CD14-positive monocyte (primary cell): ENCODE measurements at regions of chr7 and their contacts with region 1.

Region 1: DNA sequence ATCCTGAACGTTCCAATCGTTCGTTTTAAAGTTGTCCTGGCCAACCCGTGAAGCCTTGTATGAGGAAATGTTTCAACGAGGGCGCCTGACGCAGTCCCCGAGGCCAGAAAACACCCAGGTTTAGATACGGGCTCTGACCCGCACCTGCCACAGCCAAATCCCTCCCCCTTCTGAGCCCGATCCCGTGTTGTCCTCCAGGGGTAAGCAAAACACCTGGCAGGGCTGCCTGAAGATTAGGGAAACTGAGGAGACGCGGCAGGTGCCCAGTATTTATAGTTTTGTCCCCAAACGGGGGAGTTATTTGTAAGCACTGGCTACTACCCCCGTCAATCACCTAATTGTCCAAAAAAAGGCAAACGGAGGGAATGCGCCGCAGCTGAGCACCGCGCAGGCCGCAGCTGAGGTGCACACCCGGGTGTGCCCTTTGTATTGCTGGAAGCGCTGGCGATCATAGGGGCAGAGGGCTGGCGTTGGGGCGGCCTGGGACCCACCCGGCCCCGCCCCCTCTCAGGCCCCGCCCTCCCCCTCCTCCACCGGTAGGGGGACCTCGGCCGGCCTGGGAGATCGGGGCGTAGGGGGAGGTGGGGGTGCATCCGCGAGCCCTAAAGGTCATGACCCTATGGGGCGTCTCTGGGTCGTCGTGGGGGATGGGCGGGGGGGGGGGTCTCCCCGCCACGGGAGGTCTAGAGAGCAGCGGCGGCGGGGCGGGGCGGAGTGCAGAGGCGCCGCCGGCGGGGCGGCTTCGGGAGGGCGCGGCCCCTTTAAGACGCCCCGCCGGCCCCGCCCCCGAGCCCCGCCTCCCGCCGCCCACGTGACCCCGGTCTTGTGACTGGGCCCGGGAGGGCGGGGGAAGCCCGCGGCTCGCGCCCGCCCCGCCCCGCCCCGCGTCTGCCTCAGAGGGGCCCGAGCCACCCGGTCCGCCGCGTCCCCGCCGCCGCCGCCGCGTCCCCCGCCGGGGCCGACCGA is at the start of gene BRI3:
- DNase-seq: peak; percentile 85 to 90 (median 89)
- H3K4me3 ChIP-seq: peak within 1 kb of the TSS; percentile 85 to 96 (median 91)
- H3K4me3 Mint-ChIP-seq: peak within 1 kb of the TSS; percentile 92 to 97
- H3K27ac ChIP-seq: peak within 1 kb of the TSS; percentile 98 to 99
- H3K27ac Mint-ChIP-seq: peak within 1 kb of the TSS; percentile 96 to 99 (median 98)
- H3K4me1 ChIP-seq: peaks cover 47 to 62% of the 10 kb centered on the region in 2 donors
- H3K4me1 Mint-ChIP-seq: peaks cover 54% of the 10 kb centered on the region
- H3K27me3 ChIP-seq: no peaks in the 10 kb centered on the region
- H3K27me3 Mint-ChIP-seq: peaks cover 0 to 2% (median 0%) of the 10 kb centered on the region in 3 donors
- CTCF ChIP-seq: peak; percentile 36
- polyA plus RNA-seq, gene BRI3: 120 to 273 (median 149) TPM

Region 2: GRCh38 chr7:97748231-97748881 is 532.7 kb before region 1 on chr7:
- intact Hi-C with region 1: no loop called
- DNase-seq: no peak
- H3K4me3 ChIP-seq: no peak overlapping the region
- H3K4me3 Mint-ChIP-seq: no peak overlapping the region
- H3K27ac ChIP-seq: no peak overlapping the region
- H3K27ac Mint-ChIP-seq: no peak overlapping the region
- H3K4me1 ChIP-seq: no peaks in the 10 kb centered on the region
- H3K4me1 Mint-ChIP-seq: no peaks in the 10 kb centered on the region
- H3K27me3 ChIP-seq: no peaks in the 10 kb centered on the region
- H3K27me3 Mint-ChIP-seq: peaks cover 0 to 2% (median 0%) of the 10 kb centered on the region in 3 donors
- CTCF ChIP-seq: no peak

Region 3: DNA sequence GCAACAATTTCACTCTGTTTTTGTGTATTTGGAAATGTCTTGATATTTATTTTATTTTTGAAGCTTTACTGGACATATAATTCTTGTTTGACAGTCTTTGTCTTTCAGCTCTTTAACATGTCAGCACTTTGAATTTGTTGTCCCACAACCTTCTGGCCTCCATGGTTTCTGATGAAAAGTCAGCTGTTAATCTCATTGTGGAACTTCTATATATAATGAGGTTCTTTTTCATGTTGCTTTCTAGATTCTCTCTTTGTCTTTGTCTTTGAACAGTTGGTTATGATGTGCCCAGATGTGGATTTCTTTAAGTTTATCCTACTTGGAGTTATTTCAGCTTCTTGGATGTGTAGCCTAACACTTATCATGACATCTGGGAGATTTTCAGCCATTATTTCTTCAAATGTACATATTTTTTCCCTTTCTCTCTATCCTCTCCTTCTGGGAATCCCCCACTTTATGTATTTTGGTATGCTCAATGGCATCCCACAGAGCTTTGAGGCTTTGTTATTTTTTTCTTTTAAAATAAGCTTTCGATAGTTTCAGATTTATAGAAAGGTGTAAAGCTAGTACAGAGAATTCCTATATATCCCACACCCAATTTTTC is 183.9 kb before region 1 on chr7:
- intact Hi-C with region 1: no loop called
- DNase-seq: no peak
- H3K4me3 ChIP-seq: no peak overlapping the region
- H3K4me3 Mint-ChIP-seq: no peak overlapping the region
- H3K27ac ChIP-seq: no peak overlapping the region
- H3K27ac Mint-ChIP-seq: no peak overlapping the region
- H3K4me1 ChIP-seq: no peaks in the 10 kb centered on the region
- H3K4me1 Mint-ChIP-seq: no peaks in the 10 kb centered on the region
- H3K27me3 ChIP-seq: peaks cover 0 to 3% of the 10 kb centered on the region in 2 donors
- H3K27me3 Mint-ChIP-seq: peaks cover 2 to 19% (median 12%) of the 10 kb centered on the region in 3 donors
- CTCF ChIP-seq: no peak

Region 4: GRCh38 chr7:98133181-98133580 is 147.9 kb before region 1 on chr7:
- intact Hi-C with region 1: loop called in 1 of 2 experiments (anchors 5 kb)
- DNase-seq: peak; percentile 84 to 91 (median 90)
- H3K4me3 ChIP-seq: peak overlapping the region; percentile 13 to 71 (median 23)
- H3K4me3 Mint-ChIP-seq: peak overlapping the region; percentile 39 to 90
- H3K27ac ChIP-seq: peak overlapping the region in 1 of 2 donors; percentile 90
- H3K27ac Mint-ChIP-seq: peak overlapping the region; percentile 96 to 100 (median 99)
- H3K4me1 ChIP-seq: peaks cover 78 to 81% of the 10 kb centered on the region in 2 donors
- H3K4me1 Mint-ChIP-seq: peaks cover 81% of the 10 kb centered on the region
- H3K27me3 ChIP-seq: peaks cover 33 to 42% of the 10 kb centered on the region in 2 donors
- H3K27me3 Mint-ChIP-seq: peaks cover 27 to 48% (median 46%) of the 10 kb centered on the region in 3 donors
- CTCF ChIP-seq: no peak

Region 5: GRCh38 chr7:98251841-98252639 is 29.0 kb before region 1 on chr7 and contains the start of gene TECPR1:
- intact Hi-C with region 1: loop called (anchors 5 kb)
- DNase-seq: peak; percentile 92 to 94 (median 93)
- H3K4me3 ChIP-seq: peak within 1 kb of the TSS; percentile 81 to 98 (median 83)
- H3K4me3 Mint-ChIP-seq: peak within 1 kb of the TSS; percentile 92 to 96
- H3K27ac ChIP-seq: peak within 1 kb of the TSS; percentile 31 to 94
- H3K27ac Mint-ChIP-seq: peak within 1 kb of the TSS; percentile 90 to 96 (median 94)
- H3K4me1 ChIP-seq: peaks cover 53 to 57% of the 10 kb centered on the region in 2 donors
- H3K4me1 Mint-ChIP-seq: peaks cover 58% of the 10 kb centered on the region
- H3K27me3 ChIP-seq: no peaks in the 10 kb centered on the region
- H3K27me3 Mint-ChIP-seq: peaks cover 0 to 2% (median 0%) of the 10 kb centered on the region in 3 donors
- CTCF ChIP-seq: no peak
- polyA plus RNA-seq, gene TECPR1: 5.7 to 20.0 (median 10.2) TPM

Region 6: DNA sequence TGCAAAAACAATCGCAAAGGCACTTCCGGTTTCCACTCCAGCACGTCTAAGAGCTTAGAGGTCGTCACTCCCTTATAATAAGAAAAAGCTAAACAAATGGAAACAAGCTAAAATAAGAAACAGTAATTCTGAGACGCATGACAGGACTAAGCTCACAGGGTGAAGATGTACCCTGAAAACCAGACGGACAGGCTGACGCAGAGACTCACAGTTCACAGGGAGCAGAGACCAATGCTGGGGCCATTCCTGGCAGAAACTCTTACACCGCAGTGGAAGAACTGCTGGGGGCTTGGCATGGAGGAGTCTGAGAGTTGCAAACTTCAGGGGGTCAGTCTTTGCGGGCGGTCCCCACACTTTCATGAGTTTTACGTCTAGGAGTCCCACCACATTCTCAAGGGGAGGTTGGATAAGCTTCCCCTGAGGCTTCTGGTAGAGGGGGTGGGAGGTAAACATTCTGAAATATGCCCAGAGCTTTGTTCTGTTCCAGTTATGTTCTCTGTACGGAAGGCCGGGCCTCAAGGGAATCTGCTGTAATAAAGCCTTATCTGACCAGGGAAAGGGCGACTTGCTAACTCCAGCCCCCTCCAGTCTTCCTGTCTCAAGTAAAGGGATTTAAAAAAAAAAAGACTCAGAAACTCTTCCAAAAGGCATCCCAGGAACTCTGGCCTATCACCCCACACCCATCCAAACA is 48.2 kb after region 1 on chr7:
- intact Hi-C with region 1: no loop called
- DNase-seq: no peak
- H3K4me3 ChIP-seq: no peak overlapping the region
- H3K4me3 Mint-ChIP-seq: no peak overlapping the region
- H3K27ac ChIP-seq: no peak overlapping the region
- H3K27ac Mint-ChIP-seq: no peak overlapping the region
- H3K4me1 ChIP-seq: no peaks in the 10 kb centered on the region
- H3K4me1 Mint-ChIP-seq: no peaks in the 10 kb centered on the region
- H3K27me3 ChIP-seq: no peaks in the 10 kb centered on the region
- H3K27me3 Mint-ChIP-seq: peaks cover 2 to 11% (median 7%) of the 10 kb centered on the region in 3 donors
- CTCF ChIP-seq: no peak

Region 7: GRCh38 chr7:98802088-98802780 is 521.2 kb after region 1 on chr7:
- intact Hi-C with region 1: loop called (anchors 10 kb)
- DNase-seq: peak; percentile 93 to 99 (median 94)
- H3K4me3 ChIP-seq: peak overlapping the region in 1 of 3 experiments; percentile 59
- H3K4me3 Mint-ChIP-seq: peak overlapping the region; percentile 20 to 76
- H3K27ac ChIP-seq: peak overlapping the region; percentile 38 to 63
- H3K27ac Mint-ChIP-seq: peak overlapping the region; percentile 21 to 95 (median 92)
- H3K4me1 ChIP-seq: peaks cover 16% of the 10 kb centered on the region in 2 donors
- H3K4me1 Mint-ChIP-seq: peaks cover 17% of the 10 kb centered on the region
- H3K27me3 ChIP-seq: peaks cover 0 to 4% of the 10 kb centered on the region in 2 donors
- H3K27me3 Mint-ChIP-seq: peaks cover 16 to 37% (median 22%) of the 10 kb centered on the region in 3 donors
- CTCF ChIP-seq: no peak